PC-3 (cell line): ENCODE measurements at regions of chrX and their contacts with region 1.

Region 1: DNA sequence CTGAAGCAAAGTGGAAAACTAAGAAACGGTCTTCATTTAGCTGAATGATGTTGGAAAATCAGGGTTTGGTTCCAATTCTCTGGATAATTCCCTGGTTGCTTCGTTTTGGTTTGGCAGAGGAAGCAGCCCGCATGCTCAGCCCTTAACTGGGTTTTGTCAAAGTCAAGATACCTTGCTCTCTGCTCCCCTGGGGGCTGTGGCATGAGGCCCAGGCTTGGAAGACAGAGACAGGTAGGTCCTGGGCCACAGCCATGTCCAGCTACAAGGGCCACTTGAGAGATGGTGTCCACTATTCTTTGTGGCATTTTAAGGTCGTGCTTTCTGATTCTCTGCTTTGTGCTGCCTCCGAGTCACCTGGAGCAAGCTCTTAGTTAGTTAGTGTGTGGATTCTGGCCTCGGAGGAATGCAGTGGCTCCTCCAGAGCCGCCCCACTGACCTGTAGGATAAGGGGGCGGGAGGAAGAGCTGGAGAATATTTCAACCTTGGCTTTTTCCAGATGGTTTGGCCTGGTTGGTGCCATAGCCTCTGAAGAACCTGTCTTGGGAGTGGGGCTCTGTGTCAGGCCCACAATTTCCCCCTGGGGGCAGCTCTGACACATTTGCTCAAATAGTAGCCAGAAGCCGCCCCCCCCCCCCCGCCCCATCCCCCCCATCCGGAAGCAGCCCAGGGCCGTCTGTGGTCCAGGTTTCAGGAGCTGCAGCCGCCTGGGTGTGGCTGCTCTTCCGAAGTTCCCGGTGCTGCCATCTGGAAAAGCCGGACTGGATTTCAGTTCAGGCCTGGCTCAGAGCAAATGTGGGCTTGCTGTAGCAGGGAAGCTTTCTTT is 147.1 kb downstream of the NHS start:
- DNase-seq: peak; percentile 69
- ATAC-seq: peak; percentile 73
- H3K4me3 ChIP-seq: no peak overlapping the region
- H3K27ac ChIP-seq: peak overlapping the region; percentile 57
- H3K4me1 ChIP-seq: peaks cover 12% of the 10 kb centered on the region
- H3K27me3 ChIP-seq: no peaks in the 10 kb centered on the region
- CTCF ChIP-seq: no peak

Region 2: DNA sequence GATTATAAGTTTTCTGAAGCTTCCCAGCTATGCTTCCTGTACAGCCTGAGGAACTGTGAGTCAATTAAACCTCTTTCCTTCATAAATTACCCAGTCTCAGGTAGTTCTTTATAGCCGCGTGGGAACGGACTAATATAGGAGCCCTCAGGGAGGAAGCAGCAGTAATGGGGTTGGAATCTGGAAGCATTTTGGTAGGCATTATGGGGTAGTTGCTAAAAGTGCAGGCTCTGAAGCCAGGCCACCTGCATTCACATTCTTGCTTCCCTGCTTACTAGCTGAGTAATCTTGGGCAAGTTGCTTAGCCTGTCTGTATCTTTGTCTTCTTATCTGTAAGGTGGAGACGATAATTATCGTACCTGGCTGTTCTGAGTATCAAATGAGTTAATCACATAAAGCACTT is 284.9 kb before region 1 on chrX:
- CTCF ChIA-PET with region 1: interaction called, 12 read pairs
- POLR2A ChIA-PET with region 1: no interaction called
- intact Hi-C with region 1: no loop called
- DNase-seq: no peak
- ATAC-seq: no peak
- H3K4me3 ChIP-seq: no peak overlapping the region
- H3K27ac ChIP-seq: no peak overlapping the region
- H3K4me1 ChIP-seq: no peaks in the 10 kb centered on the region
- H3K27me3 ChIP-seq: no peaks in the 10 kb centered on the region
- CTCF ChIP-seq: no peak

Region 3: GRCh38 chrX:17500145-17500579 is 21.9 kb before region 1 on chrX:
- CTCF ChIA-PET with region 1: interaction called, 12 read pairs
- POLR2A ChIA-PET with region 1: no interaction called
- intact Hi-C with region 1: no loop called
- DNase-seq: peak; percentile 78
- ATAC-seq: peak; percentile 63
- H3K4me3 ChIP-seq: no peak overlapping the region
- H3K27ac ChIP-seq: peak overlapping the region; percentile 92
- H3K4me1 ChIP-seq: peaks cover 43% of the 10 kb centered on the region
- H3K27me3 ChIP-seq: no peaks in the 10 kb centered on the region
- CTCF ChIP-seq: no peak

Region 4: DNA sequence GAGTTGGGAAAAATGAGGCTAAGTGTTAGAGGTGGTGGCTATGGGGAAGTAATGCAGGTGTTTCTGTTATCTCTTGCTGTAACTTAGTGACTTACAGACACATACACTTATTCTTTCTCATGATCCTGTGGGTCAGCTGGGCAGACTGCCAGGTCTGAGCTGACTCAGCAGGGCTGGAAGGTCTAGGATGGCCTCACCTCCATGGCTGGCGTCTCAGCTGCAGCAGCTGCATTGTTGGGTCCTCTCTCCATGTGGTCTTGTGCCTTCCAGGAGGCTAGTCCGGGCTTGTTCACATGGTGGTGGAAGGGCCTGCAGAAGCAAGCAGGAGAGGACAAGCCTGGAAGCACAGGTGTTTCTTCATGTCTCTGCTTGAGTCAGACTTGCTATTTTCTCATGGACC is 25.6 kb after region 1 on chrX:
- CTCF ChIA-PET with region 1: no interaction called
- POLR2A ChIA-PET with region 1: no interaction called
- intact Hi-C with region 1: no loop called
- DNase-seq: peak; percentile 90
- ATAC-seq: peak; percentile 96
- H3K4me3 ChIP-seq: no peak overlapping the region
- H3K27ac ChIP-seq: peak overlapping the region; percentile 8; the same call in 1 of the 2 replicates
- H3K4me1 ChIP-seq: peaks cover 20% of the 10 kb centered on the region
- H3K27me3 ChIP-seq: no peaks in the 10 kb centered on the region
- CTCF ChIP-seq: no peak